Mammary epithelial cell (primary cell): ENCODE measurements at regions of chr1 and their contacts with region 1.

Region 1: GRCh38 chr1:172976222-172977041 is 74.3 kb downstream of the TNFSF18 start:
- DNase-seq: peak; percentile 94
- H3K4me3 ChIP-seq: no peak overlapping the region
- H3K27ac ChIP-seq: peak overlapping the region; percentile 61
- H3K4me1 ChIP-seq: peaks cover 29% of the 10 kb centered on the region
- H3K27me3 ChIP-seq: no peaks in the 10 kb centered on the region
- CTCF ChIP-seq: no peak

Region 2: GRCh38 chr1:172870901-172871606 is 105.4 kb before region 1 on chr1:
- CTCF ChIA-PET with region 1: no interaction called
- dilution Hi-C with region 1: no loop called
- in situ Hi-C with region 1: no loop called
- intact Hi-C with region 1: no loop called
- DNase-seq: peak; percentile 60
- H3K4me3 ChIP-seq: no peak overlapping the region
- H3K27ac ChIP-seq: no peak overlapping the region
- H3K4me1 ChIP-seq: peaks cover 6% of the 10 kb centered on the region
- H3K27me3 ChIP-seq: no peaks in the 10 kb centered on the region
- CTCF ChIP-seq: no peak

Region 3: GRCh38 chr1:172928412-172928811 is 48.0 kb before region 1 on chr1:
- CTCF ChIA-PET with region 1: no interaction called
- dilution Hi-C with region 1: loop called (anchors 5 kb)
- in situ Hi-C with region 1: no loop called
- intact Hi-C with region 1: no loop called
- DNase-seq: peak; percentile 91
- H3K4me3 ChIP-seq: no peak overlapping the region
- H3K27ac ChIP-seq: peak overlapping the region; percentile 82
- H3K4me1 ChIP-seq: peaks cover 30% of the 10 kb centered on the region
- H3K27me3 ChIP-seq: no peaks in the 10 kb centered on the region
- CTCF ChIP-seq: no peak